Sigmoid colon (tissue), 7 donors: ENCODE measurements at regions of chr7 and their contacts with region 1.

Region 1: GRCh38 chr7:6430271-6430940 is 17.3 kb downstream of the DAGLB start:
- DNase-seq: no peak
- H3K4me3 ChIP-seq: no peak overlapping the region
- H3K27ac ChIP-seq: no peak overlapping the region
- H3K4me1 ChIP-seq: peaks cover 0 to 5% (median 2%) of the 10 kb centered on the region in 4 donors
- H3K27me3 ChIP-seq: no peaks in the 10 kb centered on the region
- CTCF ChIP-seq: no peak
- EP300 ChIP-seq: no peak
- POLR2A ChIP-seq: no peak

Region 2: GRCh38 chr7:6392706-6393666 is 37.4 kb before region 1 on chr7:
- intact Hi-C with region 1: loop called (anchors 5 kb)
- DNase-seq: peak; percentile 85
- H3K4me3 ChIP-seq: no peak overlapping the region
- H3K27ac ChIP-seq: peak overlapping the region; percentile 27 to 66 (median 40)
- H3K4me1 ChIP-seq: peaks cover 0 to 60% (median 41%) of the 10 kb centered on the region in 4 donors
- H3K27me3 ChIP-seq: no peaks in the 10 kb centered on the region
- CTCF ChIP-seq: no peak
- EP300 ChIP-seq: no peak
- POLR2A ChIP-seq: no peak